Psoas muscle (tissue), 8 donors: ENCODE measurements at regions of chr2 and their contacts with region 1.

Region 1: DNA sequence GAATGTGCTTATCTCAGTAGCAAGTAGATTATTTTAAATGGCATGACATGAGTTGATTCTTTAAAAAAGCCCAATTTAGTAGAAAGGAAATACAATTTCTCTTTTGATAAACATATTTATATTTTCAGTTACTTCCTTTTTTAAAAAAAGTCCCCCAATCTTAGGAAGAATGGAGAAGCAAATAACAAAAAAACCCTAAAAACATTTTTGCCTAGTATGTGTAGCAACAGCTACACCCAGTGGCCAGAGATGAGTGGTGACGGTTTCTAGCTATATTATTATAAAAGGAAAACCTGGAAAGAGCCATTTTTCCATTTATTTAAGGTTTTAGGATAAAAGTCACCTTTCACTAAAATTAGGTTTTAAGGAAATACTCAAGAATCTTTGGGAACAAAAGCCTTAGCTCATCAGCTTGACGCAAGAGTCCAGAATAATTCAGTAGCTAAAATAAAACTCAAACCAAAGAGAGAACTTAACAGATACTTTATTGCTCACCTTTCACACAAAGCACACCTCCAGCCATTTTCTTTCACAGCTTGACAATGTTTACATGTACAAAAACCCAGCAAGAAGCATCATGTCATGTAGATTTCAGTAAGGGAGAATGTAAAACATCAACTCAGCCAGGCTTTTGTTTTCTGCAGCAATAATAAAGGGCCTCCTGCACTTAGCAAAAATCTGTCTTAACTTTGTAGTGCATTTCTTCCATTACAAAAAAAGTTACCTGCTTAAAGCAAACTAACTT is 15.7 kb downstream of the FAM98A start:
- DNase-seq: no peak
- ATAC-seq: peak; percentile 46 to 72 (median 58)
- H3K4me3 ChIP-seq: no peak overlapping the region
- H3K27ac ChIP-seq: no peak overlapping the region
- H3K4me1 ChIP-seq: peaks cover 19% of the 10 kb centered on the region
- H3K27me3 ChIP-seq: no peaks in the 10 kb centered on the region
- CTCF ChIP-seq: peak; percentile 88

Region 2: GRCh38 chr2:33291278-33292013 is 291.9 kb before region 1 on chr2:
- intact Hi-C with region 1: loop called in 1 of 2 experiments (anchors 10 kb)
- DNase-seq: no peak
- ATAC-seq: peak in 3 of 4 donors; percentile 22 to 41 (median 35)
- H3K4me3 ChIP-seq: peak overlapping the region; percentile 40
- H3K27ac ChIP-seq: peak overlapping the region; percentile 53
- H3K4me1 ChIP-seq: peaks cover 28% of the 10 kb centered on the region
- H3K27me3 ChIP-seq: no peaks in the 10 kb centered on the region
- CTCF ChIP-seq: no peak

Region 3: DNA sequence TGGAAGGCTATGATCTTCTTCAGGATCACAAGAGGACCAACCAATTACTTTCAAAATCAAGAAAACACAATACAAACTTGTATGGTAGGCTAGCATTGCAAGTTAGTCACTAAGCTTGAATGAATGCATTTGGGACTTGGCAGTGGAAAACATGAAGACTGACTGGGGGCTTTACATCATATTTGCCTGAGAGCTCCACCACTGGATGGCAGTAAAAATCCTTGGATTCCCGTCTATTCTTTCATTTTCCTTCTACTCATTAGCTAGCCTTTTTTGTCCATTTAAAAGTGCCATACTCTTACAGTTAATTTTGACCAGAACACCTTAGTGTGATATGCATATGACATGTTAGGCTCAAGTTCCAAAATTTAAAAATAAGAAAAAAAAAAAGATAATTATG is 170.4 kb before region 1 on chr2:
- intact Hi-C with region 1: loop called (anchors 5 kb)
- DNase-seq: no peak
- ATAC-seq: peak in 1 of 4 donors; percentile 42
- H3K4me3 ChIP-seq: no peak overlapping the region
- H3K27ac ChIP-seq: no peak overlapping the region
- H3K4me1 ChIP-seq: no peaks in the 10 kb centered on the region
- H3K27me3 ChIP-seq: no peaks in the 10 kb centered on the region
- CTCF ChIP-seq: peak; percentile 44

Region 4: DNA sequence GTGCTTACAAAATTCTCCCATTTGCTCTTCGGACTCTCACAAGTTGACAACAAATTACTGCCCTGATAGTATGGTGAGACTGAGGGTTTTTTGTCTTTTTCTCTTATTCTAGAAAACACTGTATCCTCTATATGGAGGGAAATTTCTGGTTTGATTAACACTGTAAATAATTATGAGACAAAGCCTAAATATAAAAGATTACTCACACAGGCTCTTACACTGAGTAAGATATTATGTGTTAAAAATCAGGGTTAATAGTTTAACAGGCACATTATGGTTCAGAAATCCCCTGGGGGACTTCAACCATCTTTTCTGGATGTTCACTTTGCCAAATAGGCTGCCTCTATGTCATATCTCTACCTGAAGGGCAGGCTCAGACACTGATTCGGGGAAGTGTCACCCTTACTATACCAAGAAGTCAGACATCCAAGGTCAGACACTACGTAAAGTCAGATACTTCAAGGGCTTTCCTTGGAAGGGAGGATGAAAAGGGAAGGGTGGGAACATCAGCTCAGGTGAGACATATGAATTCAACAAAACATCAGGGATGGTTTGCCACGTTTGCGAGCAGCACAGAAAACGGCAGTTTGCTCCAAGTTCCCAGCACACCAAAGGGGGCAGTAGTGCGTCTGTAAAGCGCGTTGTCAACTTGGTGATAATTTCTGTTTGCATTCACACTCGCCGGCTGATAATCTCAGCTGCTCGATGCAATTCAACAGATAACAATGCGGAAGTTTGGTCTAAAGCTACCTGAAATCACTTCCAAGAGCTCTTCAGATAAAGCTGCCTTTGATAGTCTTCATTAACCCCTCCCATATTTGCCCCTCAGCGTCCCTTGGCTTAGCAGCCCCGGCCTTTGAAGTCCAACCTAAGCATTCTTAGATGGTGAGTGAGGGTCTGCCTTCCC is 107.9 kb before region 1 on chr2:
- intact Hi-C with region 1: loop called (anchors 5 kb)
- DNase-seq: peak; percentile 69 to 80
- ATAC-seq: peak; percentile 66 to 80 (median 70)
- H3K4me3 ChIP-seq: peak overlapping the region; percentile 78
- H3K27ac ChIP-seq: peak overlapping the region; percentile 96
- H3K4me1 ChIP-seq: peaks cover 47% of the 10 kb centered on the region
- H3K27me3 ChIP-seq: no peaks in the 10 kb centered on the region
- CTCF ChIP-seq: peak; percentile 74

Region 5: GRCh38 chr2:33599175-33599942 is 16.0 kb after region 1 on chr2 and contains the start of gene FAM98A:
- intact Hi-C with region 1: no loop called
- DNase-seq: peak; percentile 100
- ATAC-seq: peak; percentile 96 to 98 (median 97)
- H3K4me3 ChIP-seq: peak within 1 kb of the TSS; percentile 97
- H3K27ac ChIP-seq: peak within 1 kb of the TSS; percentile 97
- H3K4me1 ChIP-seq: peaks cover 20% of the 10 kb centered on the region
- H3K27me3 ChIP-seq: no peaks in the 10 kb centered on the region
- CTCF ChIP-seq: peak; percentile 12
- total RNA-seq, gene FAM98A: 52.2 to 77.9 (median 60.5) TPM

Region 6: GRCh38 chr2:33984131-33984530 is 400.8 kb after region 1 on chr2:
- intact Hi-C with region 1: no loop called
- DNase-seq: no peak
- ATAC-seq: no peak
- H3K4me3 ChIP-seq: no peak overlapping the region
- H3K27ac ChIP-seq: no peak overlapping the region
- H3K4me1 ChIP-seq: no peaks in the 10 kb centered on the region
- H3K27me3 ChIP-seq: peaks cover 0 to 3% (median 0%) of the 10 kb centered on the region in 3 donors
- CTCF ChIP-seq: no peak